Naive thymus-derived CD4-positive, alpha-beta T cell (primary cell): ENCODE measurements at regions of chr10 and their contacts with region 1.

Region 1: GRCh38 chr10:119542988-119543813 is 682 bp upstream of the RGS10 start:
- DNase-seq: peak; percentile 54 to 74 (median 68)
- ATAC-seq: peak; percentile 68
- H3K4me3 ChIP-seq: peak overlapping the region; percentile 96
- H3K4me3 Mint-ChIP-seq: peak overlapping the region; percentile 83 to 97 (median 94)
- H3K27ac ChIP-seq: peak overlapping the region; percentile 89
- H3K27ac Mint-ChIP-seq: peak overlapping the region; percentile 86 to 95 (median 91)
- H3K4me1 ChIP-seq: peaks cover 15 to 19% of the 10 kb centered on the region in 2 donors
- H3K4me1 Mint-ChIP-seq: peaks cover 19 to 41% (median 28%) of the 10 kb centered on the region in 7 donors
- H3K27me3 ChIP-seq: no peaks in the 10 kb centered on the region
- H3K27me3 Mint-ChIP-seq: peaks cover 0 to 17% (median 3%) of the 10 kb centered on the region in 5 donors

Region 2: DNA sequence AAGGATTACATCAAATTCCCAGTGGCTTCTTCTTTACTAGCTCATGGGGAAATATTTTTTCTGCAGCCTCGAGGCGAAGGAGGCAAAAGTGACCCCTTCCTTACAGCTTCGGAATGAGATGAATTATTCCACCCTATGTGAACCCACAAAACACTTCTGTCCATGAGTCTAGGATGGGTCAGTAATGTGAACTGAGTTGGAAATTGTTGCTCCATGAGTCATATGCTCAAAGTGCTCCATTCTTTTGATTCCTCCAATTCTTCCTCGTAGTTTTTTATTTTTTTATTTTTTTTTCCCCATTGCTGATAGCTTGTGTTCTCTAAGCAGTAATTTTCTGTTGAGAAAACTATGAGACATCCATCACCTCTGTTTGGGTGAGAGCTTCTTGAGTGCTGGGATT is 1169.4 kb before region 1 on chr10:
- CTCF ChIA-PET with region 1: no interaction called
- POLR2A ChIA-PET with region 1: no interaction called
- intact Hi-C with region 1: no loop called
- DNase-seq: no peak
- ATAC-seq: no peak
- H3K4me3 ChIP-seq: no peak overlapping the region
- H3K4me3 Mint-ChIP-seq: no peak overlapping the region
- H3K27ac ChIP-seq: no peak overlapping the region
- H3K27ac Mint-ChIP-seq: no peak overlapping the region
- H3K4me1 ChIP-seq: no peaks in the 10 kb centered on the region
- H3K4me1 Mint-ChIP-seq: no peaks in the 10 kb centered on the region
- H3K27me3 ChIP-seq: peaks cover 0 to 14% of the 10 kb centered on the region in 2 donors
- H3K27me3 Mint-ChIP-seq: peaks cover 34 to 52% (median 47%) of the 10 kb centered on the region in 5 donors

Region 3: GRCh38 chr10:119103903-119104652 is 439.1 kb before region 1 on chr10 and contains the start of gene DENND10:
- CTCF ChIA-PET with region 1: no interaction called
- POLR2A ChIA-PET with region 1: no interaction called
- intact Hi-C with region 1: loop called in 1 of 2 experiments (anchors 1 kb)
- DNase-seq: peak; percentile 18 to 80 (median 51)
- ATAC-seq: peak; percentile 93
- H3K4me3 ChIP-seq: peak within 1 kb of the TSS; percentile 45
- H3K4me3 Mint-ChIP-seq: peak within 1 kb of the TSS; percentile 65 to 94 (median 85)
- H3K27ac ChIP-seq: peak within 1 kb of the TSS; percentile 69
- H3K27ac Mint-ChIP-seq: peak within 1 kb of the TSS; percentile 62 to 96 (median 84)
- H3K4me1 ChIP-seq: peaks cover 6 to 20% of the 10 kb centered on the region in 2 donors
- H3K4me1 Mint-ChIP-seq: peaks cover 5 to 35% (median 14%) of the 10 kb centered on the region in 7 donors
- H3K27me3 ChIP-seq: no peaks in the 10 kb centered on the region
- H3K27me3 Mint-ChIP-seq: no peaks in the 10 kb centered on the region
- total RNA-seq, gene DENND10: 22.1 to 41.7 (median 28.8) TPM

Region 4: DNA sequence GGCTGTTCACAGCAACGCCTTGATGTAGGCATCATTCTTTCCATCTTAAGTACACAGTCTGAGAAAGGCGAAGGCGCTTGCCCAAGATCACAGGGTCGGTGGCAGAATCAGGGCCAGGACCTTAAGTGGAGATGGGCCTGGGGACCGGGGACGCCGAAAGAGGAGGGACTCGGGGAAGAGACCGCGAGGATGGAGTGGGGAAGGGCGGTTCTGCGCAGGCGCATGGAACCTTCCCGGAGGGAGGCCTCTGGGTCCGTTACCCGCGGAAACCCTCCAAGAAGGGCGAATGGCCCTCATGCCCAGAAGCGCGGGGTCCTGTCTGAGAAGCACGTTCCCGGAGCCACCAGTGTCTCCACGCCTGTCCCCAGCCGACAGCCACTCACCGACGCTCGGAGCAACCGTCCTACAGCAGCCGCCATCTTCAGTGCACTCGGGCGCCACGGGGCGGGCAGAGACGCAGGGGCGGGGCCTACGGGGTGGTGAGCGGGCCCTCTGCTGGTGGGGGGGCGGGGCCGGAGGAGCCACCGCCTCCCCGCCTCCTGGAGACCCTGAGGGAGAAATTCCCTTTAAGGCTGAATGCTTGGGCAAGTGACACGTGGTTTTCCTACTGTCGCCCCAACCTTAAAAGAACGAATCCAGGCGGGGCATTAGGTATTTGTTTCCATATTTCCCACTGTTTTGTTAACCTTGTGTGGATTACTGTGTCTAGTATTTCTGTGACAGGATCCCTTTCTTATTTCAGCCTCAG is 364.7 kb before region 1 on chr10 and contains the start of gene PRDX3:
- CTCF ChIA-PET with region 1: no interaction called
- POLR2A ChIA-PET with region 1: no interaction called
- intact Hi-C with region 1: loop called (anchors 1 kb)
- DNase-seq: peak; percentile 81 to 96 (median 89)
- ATAC-seq: peak; percentile 100
- H3K4me3 ChIP-seq: peak within 1 kb of the TSS; percentile 97
- H3K4me3 Mint-ChIP-seq: peak within 1 kb of the TSS; percentile 91 to 99 (median 96)
- H3K27ac ChIP-seq: peak within 1 kb of the TSS; percentile 79
- H3K27ac Mint-ChIP-seq: peak within 1 kb of the TSS; percentile 86 to 98 (median 93)
- H3K4me1 ChIP-seq: peaks cover 7 to 13% of the 10 kb centered on the region in 2 donors
- H3K4me1 Mint-ChIP-seq: peaks cover 13 to 48% (median 36%) of the 10 kb centered on the region in 7 donors
- H3K27me3 ChIP-seq: no peaks in the 10 kb centered on the region
- H3K27me3 Mint-ChIP-seq: no peaks in the 10 kb centered on the region
- total RNA-seq, gene PRDX3: 11.7 to 120 (median 35.4) TPM

Region 5: DNA sequence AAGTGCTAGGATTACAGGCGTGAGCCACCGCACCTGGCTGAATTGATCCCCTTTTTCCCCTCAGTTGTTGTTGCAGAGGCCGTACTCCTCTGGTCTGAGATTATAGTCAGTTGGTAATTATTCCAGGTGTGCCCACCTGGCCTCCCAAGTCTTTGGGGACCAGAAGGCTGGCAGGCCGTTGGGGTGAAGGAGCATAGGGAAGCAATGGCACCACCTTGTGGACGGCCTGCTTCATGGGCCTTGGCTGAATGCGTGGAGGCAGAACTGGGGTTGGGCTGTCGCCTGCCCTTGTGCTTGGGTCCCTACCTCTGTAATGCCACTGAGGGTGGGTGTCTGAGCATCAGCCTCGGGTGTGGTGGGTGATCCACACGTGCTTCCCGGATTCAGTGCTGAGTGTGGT is 126.3 kb before region 1 on chr10:
- CTCF ChIA-PET with region 1: interaction called, 3 read pairs
- POLR2A ChIA-PET with region 1: no interaction called
- intact Hi-C with region 1: loop called in 1 of 2 experiments (anchors 1 kb)
- DNase-seq: peak; percentile 44 to 69 (median 62)
- ATAC-seq: peak; percentile 89
- H3K4me3 ChIP-seq: no peak overlapping the region
- H3K4me3 Mint-ChIP-seq: no peak overlapping the region
- H3K27ac ChIP-seq: no peak overlapping the region
- H3K27ac Mint-ChIP-seq: no peak overlapping the region
- H3K4me1 ChIP-seq: no peaks in the 10 kb centered on the region
- H3K4me1 Mint-ChIP-seq: peaks cover 0 to 5% (median 0%) of the 10 kb centered on the region in 7 donors
- H3K27me3 ChIP-seq: no peaks in the 10 kb centered on the region
- H3K27me3 Mint-ChIP-seq: no peaks in the 10 kb centered on the region

Region 6: GRCh38 chr10:119496273-119496672 is 46.9 kb before region 1 on chr10:
- CTCF ChIA-PET with region 1: interaction called, 28 read pairs
- POLR2A ChIA-PET with region 1: interaction called, 169 read pairs
- intact Hi-C with region 1: no loop called
- DNase-seq: peak in 1 of 9 donors; percentile 71
- ATAC-seq: no peak
- H3K4me3 ChIP-seq: no peak overlapping the region
- H3K4me3 Mint-ChIP-seq: peak overlapping the region in 9 of 10 donors; percentile 7 to 51 (median 33)
- H3K27ac ChIP-seq: peak overlapping the region; percentile 58
- H3K27ac Mint-ChIP-seq: peak overlapping the region; percentile 74 to 100 (median 93)
- H3K4me1 ChIP-seq: peaks cover 26 to 66% of the 10 kb centered on the region in 2 donors
- H3K4me1 Mint-ChIP-seq: peaks cover 40 to 90% (median 84%) of the 10 kb centered on the region in 7 donors
- H3K27me3 ChIP-seq: no peaks in the 10 kb centered on the region
- H3K27me3 Mint-ChIP-seq: no peaks in the 10 kb centered on the region

Region 7: DNA sequence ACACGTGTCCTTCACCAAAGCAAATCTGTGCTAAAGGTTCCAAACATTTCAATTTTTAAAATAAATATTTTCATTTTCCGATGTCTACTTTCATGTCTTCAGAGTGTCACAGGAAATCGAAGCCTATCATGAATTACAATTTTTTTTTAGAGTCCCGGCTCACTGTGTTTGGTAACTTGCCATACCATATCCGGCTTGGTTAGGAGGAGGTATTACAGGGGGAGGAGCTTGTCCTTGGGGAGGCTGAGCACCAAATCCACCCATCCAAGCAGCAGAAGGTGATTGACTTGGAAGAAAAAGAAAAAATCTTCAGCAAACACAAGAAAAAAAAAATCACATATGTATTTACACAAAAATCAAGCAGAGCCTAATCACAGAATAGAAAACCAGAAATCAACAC is 32.3 kb after region 1 on chr10:
- CTCF ChIA-PET with region 1: interaction called, 3 read pairs
- POLR2A ChIA-PET with region 1: interaction called, 6 read pairs
- intact Hi-C with region 1: loop called in 1 of 2 experiments (anchors 2 kb)
- DNase-seq: peak in 7 of 9 donors; percentile 46 to 76 (median 60)
- ATAC-seq: peak; percentile 86
- H3K4me3 ChIP-seq: no peak overlapping the region
- H3K4me3 Mint-ChIP-seq: peak overlapping the region in 7 of 10 donors; percentile 10 to 65 (median 27)
- H3K27ac ChIP-seq: peak overlapping the region; percentile 59
- H3K27ac Mint-ChIP-seq: peak overlapping the region; percentile 16 to 91 (median 70)
- H3K4me1 ChIP-seq: peaks cover 12 to 19% of the 10 kb centered on the region in 2 donors
- H3K4me1 Mint-ChIP-seq: peaks cover 8 to 29% (median 20%) of the 10 kb centered on the region in 7 donors
- H3K27me3 ChIP-seq: no peaks in the 10 kb centered on the region
- H3K27me3 Mint-ChIP-seq: no peaks in the 10 kb centered on the region

Region 8: GRCh38 chr10:119834188-119834587 is 291.0 kb after region 1 on chr10:
- CTCF ChIA-PET with region 1: no interaction called
- POLR2A ChIA-PET with region 1: no interaction called
- intact Hi-C with region 1: no loop called
- DNase-seq: no peak
- ATAC-seq: no peak
- H3K4me3 ChIP-seq: no peak overlapping the region
- H3K4me3 Mint-ChIP-seq: peak overlapping the region in 1 of 10 donors; percentile 47
- H3K27ac ChIP-seq: no peak overlapping the region
- H3K27ac Mint-ChIP-seq: peak overlapping the region; percentile 22 to 85 (median 78)
- H3K4me1 ChIP-seq: no peaks in the 10 kb centered on the region
- H3K4me1 Mint-ChIP-seq: peaks cover 0 to 18% (median 8%) of the 10 kb centered on the region in 7 donors
- H3K27me3 ChIP-seq: no peaks in the 10 kb centered on the region
- H3K27me3 Mint-ChIP-seq: no peaks in the 10 kb centered on the region

Region 9: GRCh38 chr10:119859420-119860258 is 316.4 kb after region 1 on chr10:
- CTCF ChIA-PET with region 1: no interaction called
- POLR2A ChIA-PET with region 1: interaction called, 3 read pairs
- intact Hi-C with region 1: loop called in 1 of 2 experiments (anchors 1 kb)
- DNase-seq: peak in 7 of 9 donors; percentile 21 to 62 (median 40)
- ATAC-seq: peak; percentile 81
- H3K4me3 ChIP-seq: no peak overlapping the region
- H3K4me3 Mint-ChIP-seq: peak overlapping the region in 1 of 10 donors; percentile 18
- H3K27ac ChIP-seq: no peak overlapping the region
- H3K27ac Mint-ChIP-seq: peak overlapping the region in 3 of 9 donors; percentile 13 to 49 (median 17)
- H3K4me1 ChIP-seq: no peaks in the 10 kb centered on the region
- H3K4me1 Mint-ChIP-seq: peaks cover 16 to 47% (median 40%) of the 10 kb centered on the region in 7 donors
- H3K27me3 ChIP-seq: no peaks in the 10 kb centered on the region
- H3K27me3 Mint-ChIP-seq: no peaks in the 10 kb centered on the region